ENCODE measurements at regions of chr4 and their contacts with region 1.

Region 1: GRCh38 chr4:17810260-17811077 is at the starts of genes DCAF16 and NCAPG:
- DNase-seq: peak; percentile 97 to 99 (median 97)
- ATAC-seq: peak; percentile 95
- H3K4me3 ChIP-seq: peak within 1 kb of the TSS; percentile 96
- H3K4me3 Mint-ChIP-seq: peak within 1 kb of the TSS; percentile 93 to 100 (median 98)
- H3K27ac ChIP-seq: peak within 1 kb of the TSS; percentile 99
- H3K27ac Mint-ChIP-seq: peak within 1 kb of the TSS; percentile 91 to 99 (median 98)
- H3K4me1 ChIP-seq: peaks cover 16 to 30% of the 10 kb centered on the region in 2 donors
- H3K4me1 Mint-ChIP-seq: peaks cover 50 to 65% (median 59%) of the 10 kb centered on the region in 7 donors
- H3K27me3 ChIP-seq: no peaks in the 10 kb centered on the region
- H3K27me3 Mint-ChIP-seq: no peaks in the 10 kb centered on the region
- total RNA-seq, gene DCAF16: 50.3 to 85.1 (median 73.8) TPM
- total RNA-seq, gene NCAPG: 0.24 to 44.1 (median 0.35) TPM

Region 2: DNA sequence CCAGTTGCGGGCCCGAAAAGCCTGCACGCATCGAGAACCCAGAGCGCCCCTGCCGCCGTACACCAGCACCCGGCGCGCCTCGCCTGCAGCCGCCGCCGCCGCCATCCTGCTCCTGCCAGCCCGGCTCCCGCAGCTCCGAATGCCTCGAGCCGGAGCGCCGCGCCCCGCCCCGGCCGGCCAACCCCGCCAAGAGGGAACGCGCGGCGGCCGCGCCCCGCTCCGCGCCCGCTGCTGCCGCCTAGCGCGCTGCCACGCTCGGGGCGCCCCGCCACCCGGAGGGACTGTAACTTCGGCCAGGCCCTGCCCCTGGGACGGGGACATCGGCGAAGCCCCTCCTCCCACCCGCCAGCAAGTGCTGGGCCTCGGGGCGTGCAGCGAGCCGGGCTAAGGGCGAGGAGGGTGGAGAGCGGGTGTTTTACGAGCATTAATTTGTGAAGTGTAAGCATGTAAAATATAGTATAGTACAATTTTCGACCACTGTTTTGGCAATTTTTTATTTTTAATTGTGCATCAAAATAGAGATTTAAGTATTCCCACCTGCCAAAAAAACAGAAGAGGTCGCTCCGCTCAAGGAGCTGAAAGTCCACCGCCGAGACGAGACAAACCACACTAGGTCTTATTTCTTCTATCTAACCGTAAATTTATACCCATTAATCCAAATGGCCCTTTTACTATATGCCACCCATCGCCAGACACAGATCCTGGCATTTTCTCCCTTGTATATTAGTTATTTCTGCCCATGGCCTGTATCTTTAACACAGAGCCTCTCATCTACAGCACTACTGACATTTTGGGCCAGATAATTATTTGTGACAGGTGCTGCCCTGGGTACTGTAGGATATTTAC is 298.3 kb before region 1 on chr4 and contains the start of gene QDPR:
- CTCF ChIA-PET with region 1: no interaction called
- POLR2A ChIA-PET with region 1: no interaction called
- intact Hi-C with region 1: loop called in 1 of 2 experiments (anchors 1 kb)
- DNase-seq: peak; percentile 55 to 81 (median 70)
- ATAC-seq: peak; percentile 95
- H3K4me3 ChIP-seq: peak within 1 kb of the TSS; percentile 94
- H3K4me3 Mint-ChIP-seq: peak within 1 kb of the TSS; percentile 86 to 100 (median 96)
- H3K27ac ChIP-seq: peak within 1 kb of the TSS; percentile 69
- H3K27ac Mint-ChIP-seq: peak within 1 kb of the TSS; percentile 83 to 96 (median 85)
- H3K4me1 ChIP-seq: peaks cover 9 to 10% of the 10 kb centered on the region in 2 donors
- H3K4me1 Mint-ChIP-seq: peaks cover 18 to 42% (median 34%) of the 10 kb centered on the region in 7 donors
- H3K27me3 ChIP-seq: no peaks in the 10 kb centered on the region
- H3K27me3 Mint-ChIP-seq: peaks cover 0 to 18% (median 6%) of the 10 kb centered on the region in 5 donors
- total RNA-seq, gene QDPR: 11.8 to 27.7 (median 23.1) TPM

Region 3: GRCh38 chr4:17576932-17577665 is 233.4 kb before region 1 on chr4 and contains the start of gene LAP3:
- CTCF ChIA-PET with region 1: interaction called, 3 read pairs
- POLR2A ChIA-PET with region 1: no interaction called
- intact Hi-C with region 1: loop called (anchors 1 kb)
- DNase-seq: peak; percentile 97 to 100 (median 99)
- ATAC-seq: peak; percentile 94
- H3K4me3 ChIP-seq: peak within 1 kb of the TSS; percentile 77
- H3K4me3 Mint-ChIP-seq: peak within 1 kb of the TSS; percentile 78 to 96 (median 92)
- H3K27ac ChIP-seq: peak within 1 kb of the TSS; percentile 96
- H3K27ac Mint-ChIP-seq: peak within 1 kb of the TSS; percentile 92 to 100 (median 97)
- H3K4me1 ChIP-seq: peaks cover 4 to 11% of the 10 kb centered on the region in 2 donors
- H3K4me1 Mint-ChIP-seq: peaks cover 20 to 47% (median 24%) of the 10 kb centered on the region in 7 donors
- H3K27me3 ChIP-seq: no peaks in the 10 kb centered on the region
- H3K27me3 Mint-ChIP-seq: peaks cover 0 to 2% (median 0%) of the 10 kb centered on the region in 5 donors
- total RNA-seq, gene LAP3: 25.2 to 142 (median 54.9) TPM

Region 4: GRCh38 chr4:17636696-17637622 is 173.5 kb before region 1 on chr4:
- CTCF ChIA-PET with region 1: no interaction called
- POLR2A ChIA-PET with region 1: no interaction called
- intact Hi-C with region 1: loop called (anchors 5 kb)
- DNase-seq: peak; percentile 33 to 71 (median 55)
- ATAC-seq: peak; percentile 89
- H3K4me3 ChIP-seq: no peak overlapping the region
- H3K4me3 Mint-ChIP-seq: no peak overlapping the region
- H3K27ac ChIP-seq: peak overlapping the region; percentile 27
- H3K27ac Mint-ChIP-seq: peak overlapping the region in 5 of 9 donors; percentile 32 to 65 (median 48)
- H3K4me1 ChIP-seq: no peaks in the 10 kb centered on the region
- H3K4me1 Mint-ChIP-seq: peaks cover 0 to 3% (median 0%) of the 10 kb centered on the region in 7 donors
- H3K27me3 ChIP-seq: no peaks in the 10 kb centered on the region
- H3K27me3 Mint-ChIP-seq: no peaks in the 10 kb centered on the region

Region 5: GRCh38 chr4:18593445-18594002 is 783.1 kb after region 1 on chr4:
- CTCF ChIA-PET with region 1: no interaction called
- POLR2A ChIA-PET with region 1: no interaction called
- intact Hi-C with region 1: loop called in 1 of 2 experiments (anchors 2 kb)
- DNase-seq: peak in 8 of 9 donors; percentile 25 to 65 (median 51)
- ATAC-seq: peak; percentile 78
- H3K4me3 ChIP-seq: no peak overlapping the region
- H3K4me3 Mint-ChIP-seq: peak overlapping the region in 1 of 10 donors; percentile 53
- H3K27ac ChIP-seq: no peak overlapping the region
- H3K27ac Mint-ChIP-seq: no peak overlapping the region
- H3K4me1 ChIP-seq: no peaks in the 10 kb centered on the region
- H3K4me1 Mint-ChIP-seq: peaks cover 0 to 7% (median 0%) of the 10 kb centered on the region in 7 donors
- H3K27me3 ChIP-seq: no peaks in the 10 kb centered on the region
- H3K27me3 Mint-ChIP-seq: peaks cover 0 to 30% (median 15%) of the 10 kb centered on the region in 5 donors

Measured in naive thymus-derived CD4-positive, alpha-beta T cell (primary cell).